ENCODE measurements at regions of chr3 and their contacts with region 1.

Region 1: DNA sequence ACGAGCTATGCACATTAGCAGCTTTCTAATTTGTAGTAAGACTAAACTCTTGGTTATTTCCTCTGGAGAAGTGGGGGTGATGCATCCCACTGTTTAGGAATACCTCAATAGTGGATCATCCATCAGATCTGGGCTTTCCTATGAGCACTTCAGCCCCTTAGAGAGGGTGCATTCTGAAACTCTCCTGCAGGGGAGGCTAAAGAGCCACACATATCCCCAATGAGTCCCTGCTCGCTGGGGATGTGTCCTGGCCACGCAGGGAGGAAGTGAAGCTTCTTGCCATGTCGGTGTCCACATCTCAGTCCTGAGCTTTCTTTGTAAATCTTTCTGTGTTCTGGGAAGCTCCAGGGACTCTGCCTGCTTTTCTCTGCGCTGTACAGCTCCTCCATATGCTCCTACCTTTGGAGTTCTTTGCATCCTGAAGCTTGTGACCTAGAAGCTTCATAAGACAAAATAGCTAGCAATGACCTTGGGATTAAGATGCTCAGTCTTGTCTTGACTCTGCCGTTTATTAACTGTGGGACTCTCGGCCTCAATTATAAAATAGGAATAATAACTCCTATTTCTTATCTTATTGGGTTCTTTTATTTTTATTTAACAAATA is 28.3 kb upstream of the MASP1 start:
- DNase-seq: no peak
- ATAC-seq: peak; percentile 64
- H3K4me3 Mint-ChIP-seq: no peak overlapping the region
- H3K27ac Mint-ChIP-seq: no peak overlapping the region
- H3K4me1 Mint-ChIP-seq: peaks cover 6% of the 10 kb centered on the region
- H3K27me3 Mint-ChIP-seq: peaks cover 36% of the 10 kb centered on the region
- CTCF ChIP-seq: no peak

Region 2: DNA sequence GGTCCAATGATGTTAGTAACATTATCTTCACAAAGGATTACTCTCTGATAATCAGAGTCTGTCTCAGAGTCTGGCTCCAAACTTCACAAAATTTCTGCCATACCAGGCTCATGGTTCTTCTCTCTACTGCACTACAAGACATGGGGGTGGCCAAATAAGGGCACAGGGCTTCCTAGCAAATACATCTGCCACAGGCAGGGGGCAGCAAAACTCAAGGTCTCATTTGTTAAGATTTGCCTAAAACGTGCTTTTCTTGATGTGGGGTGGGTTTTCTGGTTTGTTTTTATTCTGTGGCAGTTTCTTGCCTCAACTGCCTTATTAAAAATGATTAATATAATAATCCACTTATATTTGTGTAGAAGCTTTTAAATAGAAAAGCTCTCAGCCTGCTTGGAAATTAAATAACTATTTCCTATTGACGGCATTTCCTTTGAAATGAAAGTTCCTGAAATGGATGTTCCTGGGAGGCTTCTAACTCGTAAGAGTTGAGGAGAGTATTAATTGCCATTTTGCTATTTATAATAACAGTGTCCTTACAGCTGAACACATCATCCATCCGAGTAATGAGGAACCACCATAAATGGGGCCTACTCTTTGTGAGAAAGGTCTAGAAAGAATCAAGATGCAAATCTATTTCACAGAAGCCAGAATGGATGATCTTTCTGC is 296.6 kb after region 1 on chr3:
- CTCF ChIA-PET with region 1: interaction called, 15 read pairs
- POLR2A ChIA-PET with region 1: no interaction called
- intact Hi-C with region 1: loop called (anchors 1 kb)
- DNase-seq: no peak
- ATAC-seq: peak; percentile 47
- H3K4me3 Mint-ChIP-seq: no peak overlapping the region
- H3K27ac Mint-ChIP-seq: no peak overlapping the region
- H3K4me1 Mint-ChIP-seq: no peaks in the 10 kb centered on the region
- H3K27me3 Mint-ChIP-seq: peaks cover 12% of the 10 kb centered on the region
- CTCF ChIP-seq: peak; percentile 26

Region 3: GRCh38 chr3:187714404-187714979 is 394.7 kb after region 1 on chr3:
- CTCF ChIA-PET with region 1: interaction called, 58 read pairs
- POLR2A ChIA-PET with region 1: no interaction called
- intact Hi-C with region 1: loop called (anchors 1 kb)
- DNase-seq: peak; percentile 32
- ATAC-seq: peak; percentile 98
- H3K4me3 Mint-ChIP-seq: no peak overlapping the region
- H3K27ac Mint-ChIP-seq: no peak overlapping the region
- H3K4me1 Mint-ChIP-seq: no peaks in the 10 kb centered on the region
- H3K27me3 Mint-ChIP-seq: no peaks in the 10 kb centered on the region
- CTCF ChIP-seq: no peak

Region 4: DNA sequence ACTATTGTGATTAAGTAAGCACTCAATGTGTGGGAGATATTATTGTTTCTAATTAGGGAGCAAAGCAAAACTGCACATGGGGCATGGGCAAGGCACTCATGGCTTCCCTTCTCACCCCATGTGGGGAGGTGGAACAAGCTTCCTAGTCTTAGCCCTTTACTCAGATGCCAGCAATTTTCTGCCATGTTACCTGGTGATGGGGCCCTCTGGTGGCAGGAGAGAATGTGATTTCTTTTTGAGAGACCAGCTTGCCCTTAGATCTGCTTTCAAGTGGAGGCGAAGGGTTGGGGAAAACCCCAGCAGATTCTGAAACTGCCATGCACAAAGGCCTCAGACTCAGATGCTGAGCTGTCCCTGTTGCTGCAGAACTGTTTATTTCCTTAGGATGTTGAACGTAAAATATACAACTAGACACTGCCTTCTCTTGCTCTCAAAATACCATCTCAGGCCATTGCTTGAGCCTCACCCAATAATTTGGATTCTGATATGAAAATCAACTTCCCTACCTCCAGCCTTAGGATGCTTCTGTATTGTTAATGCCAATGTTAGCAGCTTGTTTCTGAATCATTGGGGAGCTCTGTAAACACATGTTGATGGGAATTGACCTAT is 1721.8 kb after region 1 on chr3:
- CTCF ChIA-PET with region 1: interaction called, 4 read pairs
- POLR2A ChIA-PET with region 1: no interaction called
- intact Hi-C with region 1: loop called (anchors 10 kb)
- DNase-seq: peak; percentile 37
- ATAC-seq: peak; percentile 97
- H3K4me3 Mint-ChIP-seq: no peak overlapping the region
- H3K27ac Mint-ChIP-seq: no peak overlapping the region
- H3K4me1 Mint-ChIP-seq: peaks cover 5% of the 10 kb centered on the region
- H3K27me3 Mint-ChIP-seq: no peaks in the 10 kb centered on the region
- CTCF ChIP-seq: peak; percentile 29